Colonic mucosa (tissue), 4 donors: ENCODE measurements at regions of chr13 and their contacts with region 1.

Region 1: DNA sequence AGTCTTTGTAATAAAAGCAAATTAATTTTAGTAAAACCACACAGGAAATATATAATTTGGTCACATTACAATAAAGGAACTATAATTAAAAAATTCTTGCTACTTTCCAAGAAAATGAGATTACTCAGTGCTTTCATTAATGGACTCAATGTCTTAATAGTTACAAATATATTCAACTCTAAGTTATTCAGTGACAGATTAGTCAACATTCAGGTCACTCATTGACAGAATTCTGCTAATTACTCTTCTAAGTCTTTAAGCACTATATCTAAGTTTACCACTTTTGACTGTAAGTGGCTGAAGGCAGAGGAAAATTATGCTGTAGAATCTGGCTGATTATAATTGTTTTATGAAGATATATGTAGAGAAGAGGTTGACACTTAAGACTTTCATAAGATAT is 1365.0 kb downstream of the EFNB2 start:
- DNase-seq: no peak
- H3K4me3 ChIP-seq: no peak overlapping the region
- H3K27ac ChIP-seq: no peak overlapping the region
- H3K4me1 ChIP-seq: no peaks in the 10 kb centered on the region
- H3K27me3 ChIP-seq: no peaks in the 10 kb centered on the region
- CTCF ChIP-seq: no peak

Region 2: GRCh38 chr13:105050686-105051085 is 119.8 kb before region 1 on chr13:
- intact Hi-C with region 1: no loop called
- DNase-seq: no peak
- H3K4me3 ChIP-seq: no peak overlapping the region
- H3K27ac ChIP-seq: no peak overlapping the region
- H3K4me1 ChIP-seq: no peaks in the 10 kb centered on the region
- H3K27me3 ChIP-seq: no peaks in the 10 kb centered on the region
- CTCF ChIP-seq: no peak

Region 3: GRCh38 chr13:105232439-105232838 is 62.0 kb after region 1 on chr13:
- intact Hi-C with region 1: no loop called
- DNase-seq: no peak
- H3K4me3 ChIP-seq: no peak overlapping the region
- H3K27ac ChIP-seq: no peak overlapping the region
- H3K4me1 ChIP-seq: no peaks in the 10 kb centered on the region
- H3K27me3 ChIP-seq: no peaks in the 10 kb centered on the region
- CTCF ChIP-seq: no peak

Region 4: DNA sequence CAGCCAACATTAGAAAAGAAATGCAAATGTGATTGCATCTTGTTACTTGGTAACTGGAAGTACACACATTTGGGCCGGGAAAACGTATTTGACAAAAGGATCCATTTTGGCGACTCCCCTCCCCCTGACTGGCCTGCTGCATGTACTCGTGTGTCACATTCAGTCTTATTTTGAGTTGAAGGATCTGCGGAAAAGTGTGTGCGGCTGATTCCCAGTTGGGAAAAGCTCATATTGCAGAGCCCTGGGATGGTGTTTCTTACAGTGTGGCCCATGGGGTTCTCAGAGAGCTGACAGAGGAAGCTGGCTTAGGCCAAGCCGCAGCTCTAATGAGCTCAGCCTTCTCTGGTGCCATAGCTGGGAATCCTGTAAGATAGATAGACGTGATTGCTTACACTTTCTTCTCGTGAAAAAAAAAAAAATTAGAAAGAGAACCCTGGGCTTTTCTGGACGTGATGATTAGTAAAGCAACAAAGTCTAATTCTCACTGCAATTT is 1567.8 kb after region 1 on chr13:
- intact Hi-C with region 1: loop called (anchors 5 kb)
- DNase-seq: no peak
- H3K4me3 ChIP-seq: no peak overlapping the region
- H3K27ac ChIP-seq: no peak overlapping the region
- H3K4me1 ChIP-seq: no peaks in the 10 kb centered on the region
- H3K27me3 ChIP-seq: no peaks in the 10 kb centered on the region
- CTCF ChIP-seq: no peak